Mammary epithelial cell (primary cell): ENCODE measurements at regions of chr21 and their contacts with region 1.

Region 1: GRCh38 chr21:26397545-26397944 is 175.5 kb downstream of the CYYR1 start:
- DNase-seq: no peak
- H3K4me3 ChIP-seq: no peak overlapping the region
- H3K27ac ChIP-seq: no peak overlapping the region
- H3K4me1 ChIP-seq: peaks cover 4% of the 10 kb centered on the region
- H3K27me3 ChIP-seq: no peaks in the 10 kb centered on the region
- CTCF ChIP-seq: no peak

Region 2: DNA sequence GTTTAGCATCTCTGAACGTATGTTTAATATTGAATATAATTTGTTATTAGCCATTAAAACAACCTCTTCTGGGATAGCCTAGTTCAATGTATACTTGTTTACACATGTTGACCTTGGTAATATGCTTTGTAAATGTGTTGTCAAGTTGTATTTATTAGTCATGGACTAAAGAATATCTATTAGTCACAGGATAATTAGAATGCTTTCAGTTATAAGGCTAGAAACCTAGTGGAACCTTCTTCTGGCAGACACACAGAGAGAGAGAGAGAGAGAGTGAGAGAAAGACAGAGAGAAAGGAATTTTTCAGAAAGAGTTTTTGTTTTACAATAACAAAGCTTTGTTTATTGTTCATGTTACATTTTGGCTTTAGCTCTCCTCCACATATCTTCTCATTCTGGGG is 45.9 kb before region 1 on chr21:
- CTCF ChIA-PET with region 1: no interaction called
- dilution Hi-C with region 1: loop called (anchors 5 kb)
- in situ Hi-C with region 1: no loop called
- intact Hi-C with region 1: loop called (anchors 10 kb)
- DNase-seq: peak; percentile 65
- H3K4me3 ChIP-seq: no peak overlapping the region
- H3K27ac ChIP-seq: peak overlapping the region; percentile 36
- H3K4me1 ChIP-seq: peaks cover 4% of the 10 kb centered on the region
- H3K27me3 ChIP-seq: no peaks in the 10 kb centered on the region
- CTCF ChIP-seq: no peak